A673 (cell line): ENCODE measurements at regions of chr2 and their contacts with region 1.

Region 1: GRCh38 chr2:118003396-118003824 is 10.5 kb downstream of the CCDC93 start:
- DNase-seq: peak; percentile 84
- H3K4me3 ChIP-seq: no peak overlapping the region
- H3K27ac ChIP-seq: no peak overlapping the region
- H3K4me1 ChIP-seq: no peaks in the 10 kb centered on the region
- H3K27me3 ChIP-seq: no peaks in the 10 kb centered on the region
- CTCF ChIP-seq: peak; percentile 85

Region 2: GRCh38 chr2:116023026-116023425 is 1980.4 kb before region 1 on chr2:
- CTCF ChIA-PET with region 1: interaction called, 11 read pairs
- POLR2A ChIA-PET with region 1: no interaction called
- intact Hi-C with region 1: no loop called
- DNase-seq: no peak
- H3K4me3 ChIP-seq: no peak overlapping the region
- H3K27ac ChIP-seq: no peak overlapping the region
- H3K4me1 ChIP-seq: no peaks in the 10 kb centered on the region
- H3K27me3 ChIP-seq: no peaks in the 10 kb centered on the region
- CTCF ChIP-seq: no peak

Region 3: DNA sequence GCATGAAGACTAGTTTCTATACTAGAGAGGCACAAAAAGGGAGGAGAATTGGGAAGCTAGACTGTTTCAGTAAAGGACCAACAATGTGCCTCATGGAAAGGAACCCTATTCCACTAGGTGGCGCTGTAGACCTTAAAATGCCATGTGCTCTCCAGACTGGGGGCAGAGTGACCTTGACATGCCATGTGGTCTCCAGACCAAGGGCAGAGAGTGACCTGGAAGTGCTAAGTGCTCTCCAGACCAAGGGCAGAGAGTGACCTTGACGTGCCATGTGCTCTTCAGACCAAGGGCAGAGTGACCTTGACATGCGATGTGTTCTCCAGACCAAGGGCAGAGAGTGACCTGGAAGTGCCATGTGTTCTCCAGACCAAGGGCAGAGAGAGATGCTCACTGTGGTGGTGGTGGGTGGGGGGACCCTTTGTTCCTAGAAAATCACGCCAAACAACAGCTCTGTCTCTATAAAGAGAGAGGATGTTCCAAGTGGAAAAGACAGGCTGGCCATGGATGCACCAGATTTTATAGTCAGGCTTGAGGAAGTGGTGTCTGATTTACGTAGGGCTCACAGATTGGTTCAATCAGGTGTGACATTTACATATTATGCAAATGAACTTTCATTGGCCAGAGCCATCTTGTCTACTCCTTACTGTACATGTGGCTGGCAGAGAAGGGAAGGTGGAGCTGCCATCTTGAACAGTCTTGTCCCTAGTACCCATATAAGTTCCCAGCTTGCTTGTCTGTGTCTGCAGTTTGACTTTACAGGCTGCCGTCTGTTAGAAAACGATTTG is 532.9 kb before region 1 on chr2:
- CTCF ChIA-PET with region 1: no interaction called
- POLR2A ChIA-PET with region 1: no interaction called
- intact Hi-C with region 1: loop called (anchors 5 kb)
- DNase-seq: peak; percentile 63
- H3K4me3 ChIP-seq: no peak overlapping the region
- H3K27ac ChIP-seq: no peak overlapping the region
- H3K4me1 ChIP-seq: no peaks in the 10 kb centered on the region
- H3K27me3 ChIP-seq: no peaks in the 10 kb centered on the region
- CTCF ChIP-seq: peak; percentile 70

Region 4: DNA sequence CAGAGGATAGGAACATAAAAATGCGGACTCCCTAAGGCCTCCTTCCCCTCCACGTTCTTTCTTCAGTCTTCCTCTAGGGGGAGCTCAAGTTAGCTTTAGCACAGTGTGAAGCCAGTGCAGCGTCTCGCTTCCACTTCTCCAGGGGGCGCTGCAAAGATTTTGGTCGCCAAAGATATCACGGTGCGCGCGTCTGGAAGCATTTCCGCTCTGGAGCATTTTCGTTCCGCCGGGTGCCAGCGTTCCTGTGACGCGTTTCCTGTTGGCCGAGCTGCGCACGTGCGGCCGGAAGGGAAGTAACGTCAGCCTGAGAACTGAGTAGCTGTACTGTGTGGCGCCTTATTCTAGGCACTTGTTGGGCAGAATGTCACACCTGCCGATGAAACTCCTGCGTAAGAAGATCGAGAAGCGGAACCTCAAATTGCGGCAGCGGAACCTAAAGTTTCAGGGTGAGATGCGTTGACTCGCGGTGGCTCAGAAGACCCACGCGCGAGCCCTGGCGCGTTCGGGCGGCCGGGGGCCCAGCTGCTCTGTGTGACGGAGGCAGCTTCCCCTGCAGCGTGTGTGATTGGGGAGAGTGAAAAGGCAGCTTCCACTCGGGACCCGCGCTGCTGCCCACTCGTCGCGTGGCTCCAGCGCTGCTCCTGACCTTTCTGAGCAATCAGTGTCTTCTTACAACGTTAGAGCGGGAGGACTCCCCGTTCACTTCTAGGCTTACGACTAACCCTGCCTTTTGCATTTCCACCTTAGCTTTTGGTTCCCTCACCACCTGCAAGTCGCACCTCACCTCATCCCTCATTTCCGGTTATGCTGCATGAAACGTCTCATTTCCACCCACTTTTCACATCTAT is 188.8 kb before region 1 on chr2 and contains the start of gene DDX18:
- CTCF ChIA-PET with region 1: interaction called, 24 read pairs
- POLR2A ChIA-PET with region 1: no interaction called
- intact Hi-C with region 1: no loop called
- DNase-seq: peak; percentile 99
- H3K4me3 ChIP-seq: peak within 1 kb of the TSS; percentile 83
- H3K27ac ChIP-seq: peak within 1 kb of the TSS; percentile 92
- H3K4me1 ChIP-seq: peaks cover 8% of the 10 kb centered on the region
- H3K27me3 ChIP-seq: no peaks in the 10 kb centered on the region
- CTCF ChIP-seq: peak; percentile 100
- total RNA-seq, gene DDX18: 90.8 and 121 TPM in 2 replicates

Region 5: GRCh38 chr2:117835990-117836760 is 167.2 kb before region 1 on chr2:
- CTCF ChIA-PET with region 1: interaction called, 32 read pairs
- POLR2A ChIA-PET with region 1: no interaction called
- intact Hi-C with region 1: loop called (anchors 1 kb)
- DNase-seq: peak; percentile 86
- H3K4me3 ChIP-seq: peak overlapping the region; percentile 20
- H3K27ac ChIP-seq: no peak overlapping the region
- H3K4me1 ChIP-seq: no peaks in the 10 kb centered on the region
- H3K27me3 ChIP-seq: no peaks in the 10 kb centered on the region
- CTCF ChIP-seq: peak; percentile 90

Region 6: DNA sequence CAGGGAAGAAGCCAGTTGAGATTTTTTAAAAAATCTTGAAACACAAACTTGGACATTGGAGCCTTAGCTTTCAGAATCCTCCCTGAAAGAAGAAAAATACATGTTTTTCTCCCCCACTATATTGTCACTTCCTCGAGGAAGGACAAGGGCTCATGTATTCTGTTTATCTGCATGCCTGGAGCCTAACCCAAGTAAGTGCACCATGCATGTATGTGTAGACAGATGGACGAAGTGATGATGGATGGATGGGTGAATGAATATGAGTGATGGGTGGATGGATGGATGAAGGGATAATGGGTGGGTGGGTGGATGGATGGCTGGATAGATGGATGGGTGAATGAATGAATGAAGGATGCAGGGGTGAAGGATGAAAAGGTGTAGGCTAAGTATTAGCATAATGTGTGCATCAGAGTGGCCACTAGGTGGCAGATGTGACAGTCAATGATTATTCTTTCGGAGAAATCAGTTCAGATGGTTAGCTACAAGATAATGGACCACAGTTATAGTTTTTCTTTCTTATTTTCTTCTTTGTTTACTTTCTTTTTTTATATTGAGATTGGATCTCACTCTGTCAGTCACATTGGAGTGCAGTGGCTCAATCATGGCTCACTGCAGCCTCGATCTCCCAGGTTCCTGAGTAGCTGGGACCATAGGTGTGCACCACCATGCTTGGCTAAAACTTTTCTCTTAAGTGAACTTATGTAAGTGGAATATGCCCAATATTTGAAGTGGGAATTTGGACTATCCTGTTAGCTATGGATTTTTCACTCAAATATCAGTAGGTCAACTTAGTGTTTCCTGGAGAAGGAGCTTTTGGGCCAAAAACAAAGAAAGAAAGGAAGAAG is 29.0 kb after region 1 on chr2:
- CTCF ChIA-PET with region 1: interaction called, 17 read pairs
- POLR2A ChIA-PET with region 1: no interaction called
- intact Hi-C with region 1: no loop called
- DNase-seq: peak; percentile 51
- H3K4me3 ChIP-seq: no peak overlapping the region
- H3K27ac ChIP-seq: no peak overlapping the region
- H3K4me1 ChIP-seq: no peaks in the 10 kb centered on the region
- H3K27me3 ChIP-seq: no peaks in the 10 kb centered on the region
- CTCF ChIP-seq: peak; percentile 85